ENCODE measurements at regions of chrX and their contacts with region 1.

Region 1: DNA sequence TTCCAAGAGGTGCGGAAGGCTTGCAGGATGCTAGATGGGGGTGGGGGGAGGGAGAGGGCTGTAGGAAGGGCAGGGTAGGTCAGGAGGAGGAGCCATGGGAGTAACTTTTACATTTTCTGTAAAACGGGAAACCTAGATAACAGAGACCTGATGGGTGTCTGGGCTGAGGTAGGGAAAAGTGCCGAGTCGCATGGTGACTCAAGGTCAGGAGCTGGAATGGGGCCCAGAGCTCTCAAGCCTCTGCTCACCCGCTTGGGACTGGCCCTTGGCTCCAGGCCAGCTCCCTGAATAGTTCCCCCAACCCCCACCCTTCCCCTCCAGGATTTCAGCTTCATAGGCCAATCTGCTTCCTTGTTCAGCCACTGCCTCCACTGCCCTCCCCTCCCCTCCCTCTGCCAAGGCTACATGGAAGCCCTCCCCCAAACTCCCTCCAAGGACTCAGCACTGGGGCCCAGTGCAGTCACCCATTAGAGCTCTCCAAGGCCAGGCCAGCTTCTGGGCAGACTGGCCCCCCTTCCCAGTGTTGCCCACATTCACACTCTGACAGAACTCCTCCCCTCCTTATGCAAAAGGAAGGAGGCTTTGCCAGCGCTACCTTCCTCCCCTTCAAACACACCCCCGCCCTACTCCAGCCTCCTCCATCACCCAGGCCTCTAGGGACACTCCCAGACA is 43.6 kb downstream of the TSC22D3 start:
- H3K4me3 ChIP-seq: no peak overlapping the region
- H3K27ac ChIP-seq: peak overlapping the region; percentile 70
- H3K4me1 ChIP-seq: peaks cover 27% of the 10 kb centered on the region
- CTCF ChIP-seq: no peak

Region 2: DNA sequence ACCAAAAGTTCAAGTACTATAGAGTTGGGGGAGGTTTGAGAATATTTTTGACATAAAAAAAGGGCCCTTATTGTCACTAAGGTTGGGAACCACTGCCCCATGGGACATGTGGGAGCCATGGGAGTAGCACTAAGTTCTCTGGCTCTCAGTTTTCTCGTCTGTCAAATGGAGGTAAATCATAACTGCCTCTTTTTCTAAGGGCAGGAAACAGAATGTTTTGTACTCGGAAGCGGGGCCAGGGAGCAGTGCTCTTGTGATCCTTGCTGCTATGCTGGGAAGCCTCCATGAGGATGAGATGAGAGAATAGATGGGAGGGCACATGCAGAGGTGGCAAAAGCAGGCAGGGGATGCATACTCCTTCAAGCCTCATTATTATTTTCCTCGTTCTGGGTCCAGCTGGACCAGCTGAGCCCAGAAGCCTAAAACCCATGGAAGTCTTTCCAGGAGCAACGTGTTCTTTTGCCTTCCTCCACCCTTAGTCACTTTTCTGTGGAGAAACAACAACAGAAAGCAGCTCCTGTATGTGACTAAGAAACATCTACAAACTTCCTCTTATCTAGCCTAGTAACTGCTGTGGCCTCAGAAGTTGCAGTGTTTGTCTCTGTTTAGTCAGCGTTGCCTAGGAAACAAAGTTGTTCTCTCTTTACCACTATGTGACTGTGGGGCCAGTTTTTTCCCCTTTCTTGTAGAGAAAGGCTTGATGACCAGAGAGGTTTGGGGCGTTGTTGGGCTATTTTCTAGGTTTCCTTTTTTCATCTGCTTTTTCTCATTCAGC is 21.2 kb before region 1 on chrX:
- CTCF ChIA-PET with region 1: interaction called, 5 read pairs
- POLR2A ChIA-PET with region 1: interaction called, 45 read pairs
- H3K4me3 ChIP-seq: no peak overlapping the region
- H3K27ac ChIP-seq: peak overlapping the region; percentile 20; the same call in 1 of the 2 replicates
- H3K4me1 ChIP-seq: peaks cover 7% of the 10 kb centered on the region
- CTCF ChIP-seq: no peak